A673 (cell line): ENCODE measurements at regions of chr13 and their contacts with region 1.

Region 1: GRCh38 chr13:37481011-37481884 is 117.3 kb downstream of the POSTN start:
- DNase-seq: no peak
- H3K4me3 ChIP-seq: no peak overlapping the region
- H3K27ac ChIP-seq: no peak overlapping the region
- H3K4me1 ChIP-seq: peaks cover 5% of the 10 kb centered on the region
- H3K27me3 ChIP-seq: no peaks in the 10 kb centered on the region
- CTCF ChIP-seq: no peak

Region 2: GRCh38 chr13:37118016-37118415 is 363.2 kb before region 1 on chr13:
- CTCF ChIA-PET with region 1: interaction called, 10 read pairs
- POLR2A ChIA-PET with region 1: no interaction called
- intact Hi-C with region 1: no loop called
- DNase-seq: no peak
- H3K4me3 ChIP-seq: no peak overlapping the region
- H3K27ac ChIP-seq: no peak overlapping the region
- H3K4me1 ChIP-seq: no peaks in the 10 kb centered on the region
- H3K27me3 ChIP-seq: no peaks in the 10 kb centered on the region
- CTCF ChIP-seq: no peak

Region 3: GRCh38 chr13:37295071-37295470 is 186.2 kb before region 1 on chr13:
- CTCF ChIA-PET with region 1: no interaction called
- POLR2A ChIA-PET with region 1: interaction called, 16 read pairs
- intact Hi-C with region 1: no loop called
- DNase-seq: no peak
- H3K4me3 ChIP-seq: no peak overlapping the region
- H3K27ac ChIP-seq: no peak overlapping the region
- H3K4me1 ChIP-seq: no peaks in the 10 kb centered on the region
- H3K27me3 ChIP-seq: peaks cover 7% of the 10 kb centered on the region
- CTCF ChIP-seq: no peak